GM10248 (cell line): ENCODE measurements at regions of chr12 and their contacts with region 1.

Region 1: DNA sequence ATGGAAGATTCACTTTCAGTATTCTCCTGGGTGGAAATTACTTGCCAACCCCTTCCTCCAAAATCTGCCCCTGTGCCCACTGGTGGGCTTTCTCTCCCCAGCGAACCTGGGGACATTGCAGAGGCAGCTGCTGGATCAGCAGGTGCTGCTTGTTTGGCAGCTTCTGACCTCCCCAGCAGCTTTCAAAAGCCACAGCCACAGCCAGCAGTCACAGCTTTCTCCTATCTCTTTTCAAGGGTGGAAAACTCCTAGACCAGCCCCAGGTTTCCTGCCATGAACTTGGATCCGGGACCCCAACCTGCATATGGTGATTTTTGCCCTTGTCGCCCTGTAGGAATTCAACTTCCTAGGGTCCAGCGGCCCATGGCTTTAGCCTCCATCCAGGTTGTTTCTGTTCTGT is 330.8 kb downstream of the ADAMTS20 start:
- DNase-seq: no peak
- CTCF ChIP-seq: no peak

Region 2: DNA sequence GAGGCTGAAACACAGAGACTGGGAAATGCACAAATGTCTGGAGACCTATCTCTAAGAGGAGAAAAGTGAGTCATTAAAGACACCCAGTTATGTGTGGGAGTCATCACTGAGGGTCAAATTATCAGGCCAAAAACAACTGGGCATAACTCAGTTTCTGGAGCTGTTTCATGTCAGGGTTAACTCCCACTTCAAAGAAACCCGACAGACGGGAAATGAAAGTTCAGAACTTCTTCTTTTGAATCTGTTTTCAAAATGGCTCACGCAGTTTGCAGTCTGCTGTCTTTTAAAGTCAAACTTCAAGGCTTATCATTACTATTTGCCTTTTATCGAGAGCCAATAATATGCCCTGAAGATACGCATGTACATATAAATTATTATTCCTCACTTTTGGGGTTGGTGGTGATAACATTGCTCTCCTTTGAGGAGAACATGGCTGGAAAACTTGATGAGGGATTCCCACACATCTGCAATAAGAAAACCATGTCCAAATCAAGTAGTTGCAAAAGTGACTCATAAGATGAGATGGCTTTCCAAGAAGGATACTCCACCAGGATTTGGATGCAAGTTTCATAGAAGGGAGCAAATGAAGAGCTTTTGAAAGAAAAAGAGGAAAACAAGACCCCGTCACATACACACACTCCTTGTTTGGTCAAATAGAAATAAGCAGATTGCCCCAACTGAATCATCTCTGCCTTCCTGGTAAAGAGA is 10.6 kb before region 1 on chr12:
- CTCF ChIA-PET with region 1: interaction called, 13 read pairs
- POLR2A ChIA-PET with region 1: no interaction called
- DNase-seq: peak; percentile 44
- CTCF ChIP-seq: no peak